Psoas muscle (tissue), 8 donors: ENCODE measurements at regions of chr9 and their contacts with region 1.

Region 1: GRCh38 chr9:92254381-92255337 is 38.8 kb downstream of the IARS1 start:
- DNase-seq: no peak
- ATAC-seq: no peak
- H3K4me3 ChIP-seq: no peak overlapping the region
- H3K27ac ChIP-seq: no peak overlapping the region
- H3K4me1 ChIP-seq: no peaks in the 10 kb centered on the region
- H3K27me3 ChIP-seq: no peaks in the 10 kb centered on the region
- CTCF ChIP-seq: no peak

Region 2: GRCh38 chr9:92308893-92309292 is 54.2 kb after region 1 on chr9:
- intact Hi-C with region 1: loop called in 1 of 2 experiments (anchors 10 kb)
- DNase-seq: no peak
- ATAC-seq: no peak
- H3K4me3 ChIP-seq: no peak overlapping the region
- H3K27ac ChIP-seq: no peak overlapping the region
- H3K4me1 ChIP-seq: peaks cover 39% of the 10 kb centered on the region
- H3K27me3 ChIP-seq: no peaks in the 10 kb centered on the region
- CTCF ChIP-seq: no peak